A673 (cell line): ENCODE measurements at regions of chr7 and their contacts with region 1.

Region 1: GRCh38 chr7:133712544-133712943 is 414.6 kb upstream of the LRGUK start:
- DNase-seq: no peak
- H3K4me3 ChIP-seq: no peak overlapping the region
- H3K27ac ChIP-seq: no peak overlapping the region
- H3K4me1 ChIP-seq: no peaks in the 10 kb centered on the region
- H3K27me3 ChIP-seq: no peaks in the 10 kb centered on the region
- CTCF ChIP-seq: no peak

Region 2: DNA sequence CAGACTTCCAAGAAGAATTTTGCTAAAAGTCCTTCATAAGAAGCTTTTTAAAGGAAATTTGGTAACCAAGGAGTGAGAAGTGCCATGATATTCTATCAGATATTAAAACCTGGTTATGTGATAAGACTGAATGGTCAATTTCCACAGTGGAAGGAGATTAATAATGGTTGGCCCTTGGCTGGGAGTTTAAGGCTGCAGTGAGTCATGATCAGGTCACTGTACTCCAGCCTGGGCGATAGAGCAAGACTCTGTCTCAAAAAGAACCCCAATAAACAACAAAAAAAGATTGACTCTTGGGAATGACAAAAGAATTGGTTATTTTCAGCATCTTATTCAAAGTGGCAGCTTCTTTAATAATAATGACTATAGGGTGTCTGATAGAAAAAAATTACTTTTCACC is 422.5 kb before region 1 on chr7:
- CTCF ChIA-PET with region 1: no interaction called
- POLR2A ChIA-PET with region 1: no interaction called
- intact Hi-C with region 1: no loop called
- DNase-seq: no peak
- H3K4me3 ChIP-seq: no peak overlapping the region
- H3K27ac ChIP-seq: no peak overlapping the region
- H3K4me1 ChIP-seq: no peaks in the 10 kb centered on the region
- H3K27me3 ChIP-seq: no peaks in the 10 kb centered on the region
- CTCF ChIP-seq: no peak

Region 3: DNA sequence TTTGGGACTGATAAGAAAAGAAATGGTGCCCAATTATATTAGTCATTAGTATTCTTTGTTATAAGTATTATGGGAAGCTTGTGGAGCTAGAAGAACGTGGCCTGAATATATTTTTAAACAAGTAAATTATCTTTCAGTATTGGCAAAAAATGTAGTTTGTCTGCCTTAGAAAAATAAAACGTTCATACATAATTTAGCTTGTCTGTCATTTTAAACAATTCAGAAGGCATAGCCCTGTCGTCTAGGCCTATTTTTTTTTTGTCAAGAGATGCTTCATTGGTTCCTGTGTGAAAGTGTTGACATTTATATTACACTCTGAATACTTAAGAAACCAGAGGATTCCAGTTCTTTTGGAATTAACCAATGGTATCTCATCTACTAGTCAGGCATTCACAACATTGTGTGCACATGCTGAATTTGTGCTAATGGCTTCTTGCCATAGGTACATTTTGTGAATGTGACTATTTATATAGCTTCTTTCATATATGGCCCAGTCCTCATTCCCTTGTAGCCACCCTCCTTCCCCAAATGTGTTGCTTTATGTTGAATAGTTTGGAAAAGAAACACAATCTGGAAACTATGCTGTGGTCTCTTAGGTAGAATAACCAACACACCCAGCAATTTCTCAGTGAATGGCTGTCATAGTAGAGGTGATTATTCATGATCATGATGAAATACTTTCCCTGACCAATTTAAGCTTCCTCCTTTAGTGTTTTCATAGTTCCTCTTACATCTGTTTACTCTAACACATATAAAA is 23.9 kb before region 1 on chr7:
- CTCF ChIA-PET with region 1: no interaction called
- POLR2A ChIA-PET with region 1: no interaction called
- intact Hi-C with region 1: no loop called
- DNase-seq: no peak
- H3K4me3 ChIP-seq: no peak overlapping the region
- H3K27ac ChIP-seq: no peak overlapping the region
- H3K4me1 ChIP-seq: no peaks in the 10 kb centered on the region
- H3K27me3 ChIP-seq: no peaks in the 10 kb centered on the region
- CTCF ChIP-seq: no peak

Region 4: GRCh38 chr7:134051020-134051419 is 338.5 kb after region 1 on chr7:
- CTCF ChIA-PET with region 1: no interaction called
- POLR2A ChIA-PET with region 1: no interaction called
- intact Hi-C with region 1: no loop called
- DNase-seq: no peak
- H3K4me3 ChIP-seq: no peak overlapping the region
- H3K27ac ChIP-seq: no peak overlapping the region
- H3K4me1 ChIP-seq: no peaks in the 10 kb centered on the region
- H3K27me3 ChIP-seq: no peaks in the 10 kb centered on the region
- CTCF ChIP-seq: no peak

Region 5: DNA sequence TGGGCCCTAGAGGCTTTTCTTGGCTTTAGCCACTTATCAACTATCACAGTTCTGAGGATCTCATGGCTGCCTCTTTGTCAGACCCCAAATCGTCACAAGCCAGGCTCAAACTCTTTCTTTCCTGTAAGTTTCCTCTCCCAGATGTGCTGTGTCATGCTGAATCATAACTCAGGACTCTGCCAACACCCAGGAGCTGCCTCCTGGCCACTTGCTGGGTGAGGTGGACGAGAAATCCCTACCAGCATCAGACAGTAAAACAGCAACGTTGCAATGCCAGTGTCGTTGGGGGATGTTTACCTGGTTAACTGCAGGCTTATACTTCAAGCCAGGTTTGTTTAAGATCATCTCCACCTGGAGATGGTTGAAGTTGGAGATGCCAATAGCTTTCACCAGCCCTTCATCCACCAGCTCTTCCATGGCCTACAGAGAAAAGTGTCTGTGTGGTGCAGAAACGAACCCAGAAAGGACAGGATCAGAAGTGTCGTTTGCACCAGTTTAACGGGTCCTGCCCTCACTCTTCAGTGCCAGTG is 736.2 kb after region 1 on chr7:
- CTCF ChIA-PET with region 1: no interaction called
- POLR2A ChIA-PET with region 1: no interaction called
- intact Hi-C with region 1: no loop called
- DNase-seq: no peak
- H3K4me3 ChIP-seq: no peak overlapping the region
- H3K27ac ChIP-seq: no peak overlapping the region
- H3K4me1 ChIP-seq: no peaks in the 10 kb centered on the region
- H3K27me3 ChIP-seq: no peaks in the 10 kb centered on the region
- CTCF ChIP-seq: no peak

Region 6: GRCh38 chr7:134622303-134622995 is 909.9 kb after region 1 on chr7:
- CTCF ChIA-PET with region 1: no interaction called
- POLR2A ChIA-PET with region 1: interaction called, 17 read pairs
- intact Hi-C with region 1: no loop called
- DNase-seq: no peak
- H3K4me3 ChIP-seq: no peak overlapping the region
- H3K27ac ChIP-seq: no peak overlapping the region
- H3K4me1 ChIP-seq: no peaks in the 10 kb centered on the region
- H3K27me3 ChIP-seq: peaks cover 98% of the 10 kb centered on the region
- CTCF ChIP-seq: no peak